Naive thymus-derived CD4-positive, alpha-beta T cell (primary cell): ENCODE measurements at regions of chr9 and their contacts with region 1.

Region 1: GRCh38 chr9:34989003-34989945 is at the start of gene DNAJB5:
- DNase-seq: peak; percentile 96 to 98 (median 97)
- ATAC-seq: peak; percentile 96
- H3K4me3 ChIP-seq: peak within 1 kb of the TSS; percentile 77
- H3K4me3 Mint-ChIP-seq: peak within 1 kb of the TSS; percentile 85 to 100 (median 96)
- H3K27ac ChIP-seq: peak within 1 kb of the TSS; percentile 77
- H3K27ac Mint-ChIP-seq: peak within 1 kb of the TSS; percentile 64 to 94 (median 89)
- H3K4me1 ChIP-seq: peaks cover 19 to 37% of the 10 kb centered on the region in 2 donors
- H3K4me1 Mint-ChIP-seq: peaks cover 35 to 62% (median 49%) of the 10 kb centered on the region in 7 donors
- H3K27me3 ChIP-seq: no peaks in the 10 kb centered on the region
- H3K27me3 Mint-ChIP-seq: no peaks in the 10 kb centered on the region
- total RNA-seq, gene DNAJB5: 1.1 to 3.7 (median 1.4) TPM

Region 2: DNA sequence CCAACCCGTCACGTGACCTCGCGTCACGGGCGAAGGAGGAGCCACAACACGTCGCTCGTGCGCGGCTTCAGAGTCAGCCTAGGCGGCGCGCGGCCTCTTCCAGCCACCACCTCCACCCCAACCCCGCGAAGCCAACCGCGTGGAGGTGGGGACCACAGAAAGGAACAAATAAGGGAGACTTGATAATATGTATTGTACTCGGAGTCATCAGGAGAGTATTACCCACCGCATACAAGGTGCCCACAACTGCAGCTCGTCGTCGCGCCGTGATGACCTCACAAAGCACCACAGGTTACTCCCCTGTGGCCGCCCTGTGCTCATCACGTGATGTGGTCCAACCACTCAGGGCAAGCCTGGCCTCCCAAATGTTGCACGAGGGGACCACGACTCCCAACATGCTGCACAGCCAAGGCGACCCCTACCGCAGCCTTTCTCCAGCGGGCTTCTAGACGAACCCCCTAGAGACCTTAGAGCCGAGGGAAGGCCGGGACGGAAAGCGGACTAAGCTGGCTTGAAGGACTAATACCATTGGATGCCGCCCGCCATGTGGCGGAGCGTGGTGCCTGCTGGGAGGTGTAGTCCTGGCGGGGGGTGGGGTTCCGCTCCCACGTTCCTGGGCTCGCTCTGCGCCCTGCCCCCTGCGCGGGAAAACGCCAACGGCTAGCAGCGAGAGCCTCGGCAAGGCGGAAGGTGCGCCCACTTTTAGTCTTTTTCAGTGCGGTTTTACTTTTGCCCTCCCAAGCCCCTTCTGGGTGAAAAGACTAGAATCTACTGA is 940.2 kb before region 1 on chr9:
- CTCF ChIA-PET with region 1: no interaction called
- POLR2A ChIA-PET with region 1: no interaction called
- intact Hi-C with region 1: loop called in 1 of 2 experiments (anchors 5 kb)
- DNase-seq: peak; percentile 96 to 99 (median 97)
- ATAC-seq: peak; percentile 93
- H3K4me3 ChIP-seq: peak overlapping the region; percentile 98
- H3K4me3 Mint-ChIP-seq: peak overlapping the region; percentile 96 to 100 (median 98)
- H3K27ac ChIP-seq: peak overlapping the region; percentile 86
- H3K27ac Mint-ChIP-seq: peak overlapping the region; percentile 98 to 100 (median 99)
- H3K4me1 ChIP-seq: peaks cover 11 to 22% of the 10 kb centered on the region in 2 donors
- H3K4me1 Mint-ChIP-seq: peaks cover 25 to 55% (median 31%) of the 10 kb centered on the region in 7 donors
- H3K27me3 ChIP-seq: no peaks in the 10 kb centered on the region
- H3K27me3 Mint-ChIP-seq: peaks cover 0 to 4% (median 0%) of the 10 kb centered on the region in 5 donors

Region 3: GRCh38 chr9:34611829-34612630 is 377.2 kb before region 1 on chr9 and contains the start of gene RPP25L:
- CTCF ChIA-PET with region 1: no interaction called
- POLR2A ChIA-PET with region 1: no interaction called
- intact Hi-C with region 1: loop called in 1 of 2 experiments (anchors 10 kb)
- DNase-seq: peak; percentile 75 to 94 (median 86)
- ATAC-seq: peak; percentile 96
- H3K4me3 ChIP-seq: peak within 1 kb of the TSS; percentile 89
- H3K4me3 Mint-ChIP-seq: peak within 1 kb of the TSS; percentile 84 to 96 (median 90)
- H3K27ac ChIP-seq: peak within 1 kb of the TSS; percentile 87
- H3K27ac Mint-ChIP-seq: peak within 1 kb of the TSS; percentile 84 to 96 (median 93)
- H3K4me1 ChIP-seq: peaks cover 10 to 17% of the 10 kb centered on the region in 2 donors
- H3K4me1 Mint-ChIP-seq: peaks cover 6 to 28% (median 21%) of the 10 kb centered on the region in 7 donors
- H3K27me3 ChIP-seq: no peaks in the 10 kb centered on the region
- H3K27me3 Mint-ChIP-seq: no peaks in the 10 kb centered on the region
- total RNA-seq, gene RPP25L: 8.8 to 27.3 (median 25.1) TPM

Region 4: DNA sequence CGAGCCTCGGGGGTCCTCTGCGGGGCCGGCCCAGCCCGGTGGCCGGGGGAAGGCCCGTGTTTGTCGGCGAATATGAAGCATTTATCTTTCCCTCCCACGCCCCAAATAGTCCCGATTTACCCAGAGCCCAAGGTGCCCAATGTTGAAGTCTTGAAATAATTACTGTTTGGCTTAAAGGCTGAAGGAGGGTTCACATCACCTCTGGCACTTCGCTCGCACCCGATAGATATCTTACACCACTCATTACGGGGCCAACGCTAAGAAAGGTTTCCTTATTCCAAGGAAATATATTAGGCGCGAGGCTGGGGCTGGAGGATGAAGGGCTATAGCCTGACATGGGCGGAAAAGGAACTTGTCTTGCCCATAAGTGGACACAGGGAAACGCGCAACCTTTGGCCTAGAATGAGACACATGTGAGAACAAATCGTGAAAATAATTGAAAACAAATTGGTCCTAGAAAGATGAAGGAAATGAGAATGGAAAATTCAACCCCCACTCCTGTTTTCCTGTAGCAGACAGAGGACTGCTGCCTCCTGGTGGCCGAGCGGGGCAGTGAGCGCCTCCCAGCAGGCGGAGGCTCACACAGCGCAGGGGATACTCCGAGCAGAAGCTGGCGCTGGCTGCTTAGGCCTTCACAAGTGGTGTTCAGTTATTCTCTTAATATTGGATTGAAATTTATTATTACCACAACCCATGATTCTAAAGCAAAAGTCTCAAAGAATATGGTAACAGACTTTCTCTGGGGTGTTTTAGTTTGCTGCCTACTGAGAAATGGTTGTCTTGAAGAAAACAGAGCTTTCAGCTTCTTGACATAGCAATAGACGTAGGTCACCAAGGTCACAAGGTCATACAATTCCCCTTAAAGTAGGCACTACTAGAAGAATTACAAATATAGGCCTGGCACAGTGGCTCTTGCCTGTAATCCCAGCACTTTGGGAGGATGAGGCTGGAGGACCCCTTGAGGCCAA is 287.2 kb before region 1 on chr9:
- CTCF ChIA-PET with region 1: no interaction called
- POLR2A ChIA-PET with region 1: no interaction called
- intact Hi-C with region 1: loop called in 1 of 2 experiments (anchors 10 kb)
- DNase-seq: peak; percentile 59 to 83 (median 73)
- ATAC-seq: peak; percentile 90
- H3K4me3 ChIP-seq: peak overlapping the region; percentile 61
- H3K4me3 Mint-ChIP-seq: peak overlapping the region; percentile 80 to 91 (median 84)
- H3K27ac ChIP-seq: no peak overlapping the region
- H3K27ac Mint-ChIP-seq: peak overlapping the region in 7 of 9 donors; percentile 1 to 84 (median 20)
- H3K4me1 ChIP-seq: no peaks in the 10 kb centered on the region
- H3K4me1 Mint-ChIP-seq: peaks cover 5 to 9% (median 6%) of the 10 kb centered on the region in 7 donors
- H3K27me3 ChIP-seq: no peaks in the 10 kb centered on the region
- H3K27me3 Mint-ChIP-seq: peaks cover 0 to 17% (median 0%) of the 10 kb centered on the region in 5 donors

Region 5: GRCh38 chr9:35035851-35036701 is 46.8 kb after region 1 on chr9:
- CTCF ChIA-PET with region 1: no interaction called
- POLR2A ChIA-PET with region 1: no interaction called
- intact Hi-C with region 1: loop called in 1 of 2 experiments (anchors 1 kb)
- DNase-seq: peak in 8 of 9 donors; percentile 35 to 59 (median 44)
- ATAC-seq: peak; percentile 83
- H3K4me3 ChIP-seq: peak overlapping the region; percentile 33
- H3K4me3 Mint-ChIP-seq: peak overlapping the region; percentile 51 to 75 (median 68)
- H3K27ac ChIP-seq: peak overlapping the region; percentile 16
- H3K27ac Mint-ChIP-seq: peak overlapping the region in 7 of 9 donors; percentile 4 to 77 (median 58)
- H3K4me1 ChIP-seq: peaks cover 0 to 6% of the 10 kb centered on the region in 2 donors
- H3K4me1 Mint-ChIP-seq: peaks cover 5 to 11% (median 7%) of the 10 kb centered on the region in 7 donors
- H3K27me3 ChIP-seq: no peaks in the 10 kb centered on the region
- H3K27me3 Mint-ChIP-seq: no peaks in the 10 kb centered on the region

Region 6: DNA sequence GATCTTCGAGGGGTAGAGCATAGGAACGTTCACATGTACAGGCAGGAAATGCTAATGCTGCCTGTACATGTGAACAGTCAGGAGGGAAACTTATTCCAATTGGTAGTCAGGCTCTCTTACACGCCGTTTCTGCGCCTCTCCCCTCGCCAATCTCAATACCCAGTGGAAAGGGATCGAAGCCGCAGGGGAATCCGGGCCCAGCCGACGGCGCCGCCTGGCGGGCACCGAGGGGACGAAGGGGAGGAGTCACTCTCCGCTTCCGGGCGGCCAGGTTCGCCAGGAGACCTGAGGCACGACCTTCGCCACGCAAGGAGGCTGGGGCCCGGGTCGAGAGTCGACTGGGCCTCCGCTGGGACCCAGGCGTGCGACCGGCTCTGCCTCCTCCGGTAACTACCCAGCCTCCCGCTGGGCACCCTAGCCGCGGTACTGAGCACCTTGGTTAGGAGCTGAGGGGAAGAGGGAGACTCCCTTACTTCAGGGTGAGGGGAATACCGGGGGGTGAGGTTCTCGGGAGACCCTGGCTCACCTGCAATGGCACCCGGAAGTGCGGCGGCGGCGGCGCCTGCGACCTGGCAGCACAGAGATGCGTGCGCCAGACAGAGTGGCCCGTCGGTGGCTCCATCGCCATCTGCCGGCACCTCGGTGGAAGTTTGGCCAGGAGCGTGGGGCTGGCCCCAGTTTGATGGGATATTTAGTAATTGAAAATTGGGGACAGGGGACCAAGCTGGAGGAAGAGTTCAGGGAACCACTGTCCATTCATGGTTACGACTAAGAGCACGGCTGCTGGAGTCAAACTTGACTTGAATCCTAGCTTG is 107.0 kb after region 1 on chr9 and contains the start of gene PIGO:
- CTCF ChIA-PET with region 1: interaction called, 5 read pairs
- POLR2A ChIA-PET with region 1: interaction called, 3 read pairs
- intact Hi-C with region 1: loop called (anchors 1 kb)
- DNase-seq: peak; percentile 85 to 94 (median 92)
- ATAC-seq: peak; percentile 96
- H3K4me3 ChIP-seq: peak within 1 kb of the TSS; percentile 97
- H3K4me3 Mint-ChIP-seq: peak within 1 kb of the TSS; percentile 81 to 90 (median 86)
- H3K27ac ChIP-seq: peak within 1 kb of the TSS; percentile 99
- H3K27ac Mint-ChIP-seq: peak within 1 kb of the TSS; percentile 77 to 96 (median 94)
- H3K4me1 ChIP-seq: peaks cover 8 to 11% of the 10 kb centered on the region in 2 donors
- H3K4me1 Mint-ChIP-seq: peaks cover 25 to 50% (median 38%) of the 10 kb centered on the region in 7 donors
- H3K27me3 ChIP-seq: no peaks in the 10 kb centered on the region
- H3K27me3 Mint-ChIP-seq: no peaks in the 10 kb centered on the region
- total RNA-seq, gene PIGO: 27.1 to 36.0 (median 29.9) TPM

Region 7: DNA sequence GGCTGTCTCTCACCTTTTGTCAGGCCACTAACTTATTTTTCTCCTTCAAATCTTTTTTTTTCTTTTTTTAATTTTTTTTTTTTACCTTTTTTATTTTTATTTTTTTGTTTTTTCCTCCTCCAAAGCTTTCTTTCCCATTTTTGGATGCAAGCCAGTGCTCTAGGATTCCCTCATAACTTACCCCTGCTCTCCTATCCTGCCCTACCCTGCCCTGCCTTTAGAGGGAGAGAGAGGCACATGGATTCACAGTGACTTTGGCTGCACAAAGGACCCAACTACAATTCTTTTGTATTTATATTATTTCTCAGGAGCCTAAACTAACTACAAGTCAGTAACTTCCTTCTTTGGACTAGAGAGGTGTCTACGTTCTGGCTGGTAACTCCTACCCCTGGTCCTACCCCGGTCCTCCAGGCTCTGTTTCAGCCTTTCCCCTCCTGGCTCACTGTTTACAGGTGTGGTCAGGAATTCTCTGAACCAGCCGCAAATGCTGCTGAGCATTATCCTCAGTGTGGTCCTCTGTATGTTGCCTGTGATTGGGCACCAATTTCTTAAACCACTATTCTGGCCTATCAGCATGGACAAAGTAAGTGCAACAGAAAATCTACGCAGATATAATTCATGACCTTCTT is 492.2 kb after region 1 on chr9:
- CTCF ChIA-PET with region 1: interaction called, 3 read pairs
- POLR2A ChIA-PET with region 1: no interaction called
- intact Hi-C with region 1: loop called in 1 of 2 experiments (anchors 1 kb)
- DNase-seq: peak in 3 of 9 donors; percentile 14 to 38 (median 19)
- ATAC-seq: peak; percentile 68
- H3K4me3 ChIP-seq: no peak overlapping the region
- H3K4me3 Mint-ChIP-seq: no peak overlapping the region
- H3K27ac ChIP-seq: no peak overlapping the region
- H3K27ac Mint-ChIP-seq: no peak overlapping the region
- H3K4me1 ChIP-seq: no peaks in the 10 kb centered on the region
- H3K4me1 Mint-ChIP-seq: no peaks in the 10 kb centered on the region
- H3K27me3 ChIP-seq: peaks cover 0 to 4% of the 10 kb centered on the region in 2 donors
- H3K27me3 Mint-ChIP-seq: peaks cover 0 to 15% (median 8%) of the 10 kb centered on the region in 5 donors